Activated CD4-positive, alpha-beta memory T cell treated with anti-CD3 and anti-CD28 coated beads for 36 hours (primary cell): ENCODE measurements at regions of chr16 and their contacts with region 1.

Region 1: GRCh38 chr16:31700526-31701388 is 172.8 kb upstream of the ZNF267 start:
- DNase-seq: peak; percentile 92
- H3K4me3 Mint-ChIP-seq: peak overlapping the region; percentile 90
- H3K27ac Mint-ChIP-seq: peak overlapping the region; percentile 93
- H3K4me1 Mint-ChIP-seq: peaks cover 28% of the 10 kb centered on the region
- H3K27me3 Mint-ChIP-seq: no peaks in the 10 kb centered on the region

Region 2: DNA sequence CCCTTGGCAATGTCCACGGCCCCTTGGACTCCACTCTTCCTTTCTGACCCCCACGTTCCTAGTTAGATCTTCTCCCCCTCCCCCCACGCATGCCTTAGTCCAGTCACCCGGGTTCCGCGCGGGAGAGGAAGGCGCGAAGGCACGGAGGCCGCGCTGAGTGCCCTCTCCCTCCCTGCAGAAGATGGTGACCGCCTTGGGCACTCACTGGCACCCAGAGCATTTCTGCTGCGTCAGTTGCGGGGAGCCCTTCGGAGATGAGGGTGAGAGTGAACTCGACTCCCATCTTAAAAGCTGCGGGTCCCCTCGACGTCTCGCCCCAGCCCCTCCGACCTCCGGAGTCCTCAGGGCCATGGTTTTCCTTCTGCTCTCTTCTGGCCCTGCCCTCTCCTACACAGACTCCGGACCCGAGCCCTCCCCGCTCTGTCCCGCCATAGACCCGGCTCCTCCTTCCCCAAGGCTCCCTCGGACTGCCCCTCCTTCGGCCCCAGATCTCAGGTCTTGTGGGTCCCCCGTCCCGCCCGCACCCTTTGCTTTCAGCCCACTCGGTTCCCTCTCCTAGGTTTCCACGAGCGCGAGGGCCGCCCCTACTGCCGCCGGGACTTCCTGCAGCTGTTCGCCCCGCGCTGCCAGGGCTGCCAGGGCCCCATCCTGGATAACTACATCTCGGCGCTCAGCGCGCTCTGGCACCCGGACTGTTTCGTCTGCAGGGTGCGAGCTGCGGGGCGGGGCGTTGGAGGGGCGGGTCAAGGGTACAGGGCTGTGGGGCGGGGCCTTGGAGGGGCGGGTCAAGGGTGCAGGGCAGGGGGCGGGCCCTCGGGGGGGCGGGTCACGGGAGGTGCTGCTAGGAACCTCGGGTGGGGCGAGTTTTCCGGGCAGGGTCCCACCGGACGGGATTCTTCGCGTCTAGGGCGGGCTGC is 224.2 kb before region 1 on chr16:
- CTCF ChIA-PET with region 1: no interaction called
- POLR2A ChIA-PET with region 1: no interaction called
- intact Hi-C with region 1: loop called (anchors 5 kb)
- DNase-seq: peak; percentile 94
- H3K4me3 Mint-ChIP-seq: peak overlapping the region; percentile 75
- H3K27ac Mint-ChIP-seq: peak overlapping the region; percentile 51
- H3K4me1 Mint-ChIP-seq: peaks cover 18% of the 10 kb centered on the region
- H3K27me3 Mint-ChIP-seq: peaks cover 12% of the 10 kb centered on the region

Region 3: GRCh38 chr16:31507929-31508705 is 192.6 kb before region 1 on chr16 and contains the start of gene RUSF1:
- CTCF ChIA-PET with region 1: no interaction called
- POLR2A ChIA-PET with region 1: no interaction called
- intact Hi-C with region 1: loop called (anchors 2 kb)
- DNase-seq: peak; percentile 92
- H3K4me3 Mint-ChIP-seq: peak within 1 kb of the TSS; percentile 93
- H3K27ac Mint-ChIP-seq: peak within 1 kb of the TSS; percentile 94
- H3K4me1 Mint-ChIP-seq: peaks cover 44% of the 10 kb centered on the region
- H3K27me3 Mint-ChIP-seq: no peaks in the 10 kb centered on the region
- total RNA-seq, gene RUSF1: 40.9 to 41.2 TPM

Region 4: DNA sequence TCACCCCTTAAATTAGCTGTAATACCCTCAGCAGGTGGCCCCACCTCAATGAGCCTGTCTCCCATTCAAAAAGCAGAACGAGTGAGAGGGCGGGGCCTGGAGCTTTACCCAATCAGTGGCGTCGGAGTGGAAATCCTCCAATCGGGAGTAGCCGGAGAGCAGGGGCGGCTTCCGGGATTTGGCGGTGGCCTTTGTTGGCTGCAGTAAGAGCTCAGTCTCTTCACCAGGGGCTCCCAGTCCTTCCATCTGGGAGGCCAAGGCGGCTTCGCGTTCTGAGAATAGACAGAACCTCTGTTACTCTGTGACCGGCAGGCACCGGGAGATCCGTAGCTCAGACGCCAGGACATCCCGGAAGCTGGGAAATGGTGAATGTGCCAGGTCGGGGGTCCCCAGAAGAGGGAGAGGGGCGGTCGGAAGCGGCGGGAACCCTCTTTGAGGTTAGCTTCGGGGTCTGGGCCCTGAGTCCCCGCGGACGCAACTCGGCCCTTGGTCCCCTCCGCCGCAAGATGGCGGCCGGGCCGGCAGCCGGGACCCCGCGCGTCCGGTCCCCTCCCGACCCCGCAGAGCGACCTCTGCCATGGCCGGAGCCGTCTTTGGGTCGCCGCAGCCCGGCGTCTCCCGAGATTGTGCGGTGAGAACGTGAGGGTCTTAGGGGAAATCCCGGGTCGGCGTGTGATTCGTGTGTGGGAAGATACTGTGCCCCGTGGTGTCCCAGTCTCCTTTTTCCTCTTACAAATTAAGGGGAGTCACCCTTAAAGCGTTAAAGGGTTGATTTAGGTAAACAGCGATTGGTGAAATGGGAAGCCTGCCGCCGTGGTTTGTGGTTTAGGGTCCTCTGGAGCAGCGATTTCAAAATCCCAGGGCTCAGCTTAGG is 12.6 kb after region 1 on chr16:
- CTCF ChIA-PET with region 1: interaction called, 8 read pairs
- POLR2A ChIA-PET with region 1: interaction called, 42 read pairs
- intact Hi-C with region 1: loop called (anchors 1 kb)
- DNase-seq: peak; percentile 95
- H3K4me3 Mint-ChIP-seq: peak overlapping the region; percentile 99
- H3K27ac Mint-ChIP-seq: peak overlapping the region; percentile 98
- H3K4me1 Mint-ChIP-seq: peaks cover 43% of the 10 kb centered on the region
- H3K27me3 Mint-ChIP-seq: no peaks in the 10 kb centered on the region

Region 5: GRCh38 chr16:31873556-31874365 is 173.0 kb after region 1 on chr16 and contains the start of gene ZNF267:
- CTCF ChIA-PET with region 1: interaction called, 5 read pairs
- POLR2A ChIA-PET with region 1: interaction called, 6 read pairs
- intact Hi-C with region 1: loop called (anchors 1 kb)
- DNase-seq: peak; percentile 96
- H3K4me3 Mint-ChIP-seq: peak within 1 kb of the TSS; percentile 90
- H3K27ac Mint-ChIP-seq: peak within 1 kb of the TSS; percentile 99
- H3K4me1 Mint-ChIP-seq: peaks cover 69% of the 10 kb centered on the region
- H3K27me3 Mint-ChIP-seq: no peaks in the 10 kb centered on the region
- total RNA-seq, gene ZNF267: 72.1 to 76.4 TPM